ENCODE measurements at regions of chr6 and their contacts with region 1.

Region 1: DNA sequence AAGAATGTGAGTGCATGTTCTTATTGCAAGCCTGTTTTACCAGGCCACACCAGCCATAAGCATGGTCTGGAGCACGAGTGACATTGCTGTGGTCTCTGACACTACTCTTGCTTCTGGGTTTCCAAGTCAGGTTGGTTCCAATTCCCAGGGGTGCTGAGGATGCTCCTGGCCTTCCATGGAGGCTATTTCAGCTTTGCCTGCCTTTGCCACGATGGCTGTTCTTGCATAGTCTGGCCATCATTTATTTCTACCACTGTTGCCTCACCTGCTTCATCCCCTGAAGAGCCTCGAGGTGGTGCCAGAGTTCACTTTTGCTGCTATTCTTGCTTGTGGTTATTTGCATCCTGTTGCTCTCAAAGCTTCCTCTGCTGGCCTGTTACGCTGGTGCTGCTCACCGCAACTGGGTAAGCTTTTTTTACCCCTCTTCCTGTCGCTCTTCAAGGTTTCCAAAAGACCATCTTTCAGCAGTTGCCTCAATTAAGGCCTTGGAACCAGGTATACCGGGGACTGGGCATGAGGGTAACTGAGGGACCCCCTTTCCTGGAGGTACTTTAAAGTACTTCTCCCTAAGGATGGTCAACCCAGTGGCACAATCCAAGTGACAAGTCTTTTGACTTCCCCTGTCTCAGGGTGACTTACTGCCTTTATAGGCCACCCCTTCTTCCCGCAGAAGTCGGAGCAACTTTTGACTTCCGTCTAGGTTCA is 64.5 kb downstream of the AKAP7 start:
- DNase-seq: peak; percentile 71
- H3K4me3 Mint-ChIP-seq: peak overlapping the region; percentile 74
- H3K27ac Mint-ChIP-seq: peak overlapping the region; percentile 90
- H3K4me1 Mint-ChIP-seq: peaks cover 55% of the 10 kb centered on the region
- H3K27me3 Mint-ChIP-seq: peaks cover 3% of the 10 kb centered on the region

Region 2: DNA sequence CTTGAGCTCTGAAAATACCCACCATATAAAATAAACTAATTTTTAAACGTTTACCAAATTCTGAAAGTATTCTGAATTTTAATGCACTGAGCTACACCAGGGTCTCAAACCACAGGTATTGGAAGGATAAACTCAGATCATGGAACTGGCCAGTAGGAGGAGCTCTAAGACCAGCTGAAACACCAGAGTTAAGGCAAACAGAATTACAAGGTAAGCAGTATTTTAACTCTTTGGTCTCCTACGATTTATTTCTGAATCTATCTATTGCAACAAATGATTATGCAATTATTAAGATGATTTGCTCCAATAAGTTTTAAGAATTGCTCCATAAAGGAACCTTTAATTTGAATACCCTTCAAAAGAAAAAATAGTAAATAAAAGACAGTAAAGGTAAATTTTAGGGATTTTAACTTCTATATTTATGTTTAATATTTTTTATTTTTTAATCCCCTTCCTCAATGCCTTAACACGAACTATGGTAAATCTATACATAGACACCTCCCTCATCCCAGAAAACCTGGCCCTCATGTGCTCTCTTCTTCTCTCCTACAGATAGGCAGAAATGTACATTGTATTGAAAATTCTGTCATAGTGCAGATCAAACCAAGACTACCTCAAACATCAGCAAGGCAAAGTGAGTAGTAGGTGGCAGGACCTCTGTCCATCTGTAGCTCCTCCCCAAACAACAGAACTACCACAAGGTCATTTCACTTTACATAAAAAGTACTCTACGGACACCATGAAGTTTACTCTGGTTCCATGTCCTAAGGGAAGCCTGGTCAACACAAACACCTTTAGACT is 314.1 kb before region 1 on chr6:
- intact Hi-C with region 1: loop called (anchors 2 kb)
- DNase-seq: peak; percentile 53
- H3K4me3 Mint-ChIP-seq: no peak overlapping the region
- H3K27ac Mint-ChIP-seq: no peak overlapping the region
- H3K4me1 Mint-ChIP-seq: no peaks in the 10 kb centered on the region
- H3K27me3 Mint-ChIP-seq: no peaks in the 10 kb centered on the region

Region 3: DNA sequence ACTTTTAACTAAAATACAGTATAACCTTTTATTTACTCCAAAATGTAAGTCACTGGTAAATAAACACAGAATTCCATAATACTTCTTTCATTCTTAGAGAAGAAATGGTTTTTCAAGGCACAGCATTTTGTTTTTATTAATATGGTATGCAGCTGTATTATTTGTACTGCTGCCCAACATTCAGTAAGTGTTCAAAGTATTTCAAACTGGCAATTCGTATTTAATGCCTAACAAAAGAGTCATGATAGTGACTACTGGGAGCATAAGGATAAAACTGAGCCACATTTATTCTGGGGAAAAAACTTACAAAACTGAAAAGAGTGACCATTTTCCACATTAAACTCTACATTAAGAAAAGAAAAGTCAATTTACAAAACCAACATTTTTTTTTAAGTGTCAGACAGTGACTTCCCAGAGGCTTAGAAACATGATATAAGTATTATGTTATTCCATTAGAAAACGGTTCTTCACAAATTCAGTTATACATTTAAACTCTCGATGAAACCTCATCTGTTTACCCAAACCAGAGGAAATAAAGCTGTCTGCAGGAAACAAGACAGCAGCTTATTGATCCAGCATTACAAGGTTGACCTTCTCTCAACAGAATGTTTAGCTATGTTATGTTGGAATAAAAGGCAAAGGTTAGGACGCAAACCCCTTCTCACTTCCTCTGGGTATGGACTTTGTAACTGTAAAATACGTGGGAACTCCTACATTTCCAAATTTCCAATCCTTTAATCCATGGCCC is 160.9 kb before region 1 on chr6:
- intact Hi-C with region 1: no loop called
- DNase-seq: no peak
- H3K4me3 Mint-ChIP-seq: no peak overlapping the region
- H3K27ac Mint-ChIP-seq: no peak overlapping the region
- H3K4me1 Mint-ChIP-seq: peaks cover 5% of the 10 kb centered on the region
- H3K27me3 Mint-ChIP-seq: no peaks in the 10 kb centered on the region

Region 4: DNA sequence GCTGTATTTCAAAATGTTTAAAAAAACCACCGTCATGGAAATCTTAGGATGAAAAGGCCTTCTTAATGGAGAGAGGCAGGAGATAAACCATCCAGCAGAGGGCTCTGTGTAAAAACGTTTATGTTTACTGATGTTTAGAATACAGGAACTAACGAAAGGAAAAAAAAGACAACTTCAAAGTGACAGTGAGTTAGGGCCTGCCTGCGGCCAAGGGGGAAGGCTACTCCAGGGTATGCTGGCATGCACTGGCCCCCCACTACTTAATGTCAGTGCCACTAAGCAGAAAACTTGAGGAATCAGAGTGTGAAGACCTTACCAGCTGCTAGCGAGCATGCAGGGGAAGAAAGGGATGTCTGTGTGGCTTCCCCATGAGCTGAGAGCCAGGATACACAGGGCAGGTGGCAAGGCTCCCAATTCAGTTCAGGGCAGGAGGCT is 16.7 kb before region 1 on chr6:
- intact Hi-C with region 1: loop called (anchors 1 kb)
- DNase-seq: peak; percentile 12
- H3K4me3 Mint-ChIP-seq: no peak overlapping the region
- H3K27ac Mint-ChIP-seq: peak overlapping the region; percentile 69
- H3K4me1 Mint-ChIP-seq: peaks cover 7% of the 10 kb centered on the region
- H3K27me3 Mint-ChIP-seq: no peaks in the 10 kb centered on the region

Region 5: DNA sequence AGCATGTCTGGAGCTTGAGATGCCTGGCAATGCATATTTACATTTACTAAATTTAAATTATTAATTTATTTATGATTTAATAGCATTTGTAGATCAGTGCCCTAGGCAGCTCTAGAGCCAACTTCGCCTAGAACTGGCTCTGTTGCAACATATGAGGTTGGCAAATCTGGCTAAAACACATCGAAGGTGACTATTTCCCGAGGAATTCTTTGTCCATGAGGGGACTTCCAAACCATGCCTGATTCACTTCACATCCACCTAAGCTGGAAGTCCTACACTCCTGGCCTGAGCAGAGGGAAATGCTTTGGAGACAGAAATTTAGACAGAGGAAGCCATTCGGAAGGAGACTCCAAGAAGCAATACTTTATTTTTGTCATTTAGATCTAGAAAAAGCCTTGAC is 162.3 kb after region 1 on chr6:
- intact Hi-C with region 1: loop called (anchors 5 kb)
- DNase-seq: no peak
- H3K4me3 Mint-ChIP-seq: no peak overlapping the region
- H3K27ac Mint-ChIP-seq: no peak overlapping the region
- H3K4me1 Mint-ChIP-seq: peaks cover 5% of the 10 kb centered on the region
- H3K27me3 Mint-ChIP-seq: no peaks in the 10 kb centered on the region

Region 6: DNA sequence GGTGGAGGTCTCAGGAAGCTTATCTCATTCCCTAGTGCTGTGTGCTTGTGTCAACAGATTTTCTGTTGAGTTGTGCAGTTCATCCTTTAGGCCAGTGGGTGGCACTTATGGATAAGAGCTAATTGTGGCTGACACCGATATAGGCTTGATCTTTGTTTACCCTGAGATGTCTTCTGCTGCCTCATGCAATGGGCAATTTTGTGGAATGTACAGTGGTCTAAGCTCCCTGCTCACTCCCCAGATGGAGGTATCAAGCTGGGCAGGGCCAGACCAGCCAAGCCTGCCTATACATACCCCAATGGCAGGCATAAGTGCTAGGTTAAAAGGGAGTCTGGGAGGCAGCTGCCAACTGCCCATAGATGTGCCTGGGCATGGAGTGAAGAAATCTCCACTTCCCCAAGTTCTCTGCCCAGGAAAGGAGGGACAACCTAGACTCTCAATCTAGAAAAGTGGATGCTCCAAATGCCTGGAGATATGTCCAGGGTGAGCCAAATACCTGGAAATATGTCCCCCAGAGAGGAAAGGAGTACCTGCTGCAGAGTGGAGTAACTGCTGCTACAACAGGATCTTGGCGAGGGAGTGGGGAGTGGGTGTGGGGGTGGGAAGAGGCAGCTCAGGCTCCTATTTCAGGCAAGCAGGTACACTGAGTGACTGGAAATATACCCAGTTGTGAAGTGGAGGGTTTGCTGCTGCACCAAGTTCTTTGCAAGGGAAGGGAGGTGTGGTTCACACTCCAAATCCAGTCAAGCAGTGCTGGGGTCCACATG is 320.1 kb after region 1 on chr6:
- intact Hi-C with region 1: loop called (anchors 1 kb)
- DNase-seq: peak; percentile 27
- H3K4me3 Mint-ChIP-seq: no peak overlapping the region
- H3K27ac Mint-ChIP-seq: no peak overlapping the region
- H3K4me1 Mint-ChIP-seq: peaks cover 14% of the 10 kb centered on the region
- H3K27me3 Mint-ChIP-seq: peaks cover 10% of the 10 kb centered on the region

Measured in activated T-helper 1 cell treated with anti-CD3 and anti-CD28 coated beads, Interleukin-12 subunit alpha, Interleukin-12 subunit beta, Interleukin-2, Interleukin-4 antibody, amounts not matched to agents 30 ng/mL and 10 ng/mL and 1 ng/mL, durations not matched to agents 14 hours and 24 hours and 36 hours (primary cell).